HCT116 (cell line): ENCODE measurements at regions of chr2 and their contacts with region 1.

Region 1: GRCh38 chr2:68031542-68032160 is 31.2 kb downstream of the C1D start:
- DNase-seq: peak; percentile 32
- ATAC-seq: peak; percentile 77
- H3K4me3 ChIP-seq: no peak overlapping the region
- H3K27ac ChIP-seq: no peak overlapping the region
- H3K4me1 ChIP-seq: no peaks in the 10 kb centered on the region
- H3K27me3 ChIP-seq: peaks cover 5% of the 10 kb centered on the region; the same call in 1 of the 2 replicates
- CTCF ChIP-seq: peak; percentile 39 to 73 (median 53); a peak in 5 of 6 replicates
- POLR2A ChIP-seq: no peak
- RAD21 ChIP-seq: peak; percentile 84

Region 2: GRCh38 chr2:67322353-67323001 is 709.2 kb before region 1 on chr2:
- CTCF ChIA-PET with region 1: no interaction called
- POLR2A ChIA-PET with region 1: no interaction called
- RAD21 ChIA-PET with region 1: no interaction called
- intact Hi-C with region 1: no loop called
- DNase-seq: peak; percentile 47
- ATAC-seq: peak; percentile 95
- H3K4me3 ChIP-seq: no peak overlapping the region
- H3K27ac ChIP-seq: no peak overlapping the region
- H3K4me1 ChIP-seq: no peaks in the 10 kb centered on the region
- H3K27me3 ChIP-seq: peaks cover 18% of the 10 kb centered on the region; the same call in 1 of the 2 replicates
- CTCF ChIP-seq: peak; percentile 26 to 52 (median 50); a peak in 3 of 6 replicates
- POLR2A ChIP-seq: no peak
- RAD21 ChIP-seq: peak; percentile 70

Region 3: GRCh38 chr2:67733517-67733916 is 298.1 kb before region 1 on chr2:
- CTCF ChIA-PET with region 1: interaction called, 28 read pairs
- POLR2A ChIA-PET with region 1: no interaction called
- RAD21 ChIA-PET with region 1: interaction called, 3 to 4 read pairs
- intact Hi-C with region 1: loop called (anchors 1 kb)
- DNase-seq: peak; percentile 12
- ATAC-seq: peak; percentile 97
- H3K4me3 ChIP-seq: no peak overlapping the region
- H3K27ac ChIP-seq: no peak overlapping the region
- H3K4me1 ChIP-seq: no peaks in the 10 kb centered on the region
- H3K27me3 ChIP-seq: peaks cover 21% of the 10 kb centered on the region
- CTCF ChIP-seq: peak; percentile 20 to 49 (median 36); a peak in 4 of 6 replicates
- POLR2A ChIP-seq: no peak
- RAD21 ChIP-seq: peak; percentile 36

Region 4: GRCh38 chr2:67846370-67847070 is 185.1 kb before region 1 on chr2:
- CTCF ChIA-PET with region 1: interaction called, 10 read pairs
- POLR2A ChIA-PET with region 1: no interaction called
- RAD21 ChIA-PET with region 1: no interaction called
- intact Hi-C with region 1: loop called (anchors 1 kb)
- DNase-seq: peak; percentile 75
- ATAC-seq: peak; percentile 95
- H3K4me3 ChIP-seq: no peak overlapping the region
- H3K27ac ChIP-seq: no peak overlapping the region
- H3K4me1 ChIP-seq: peaks cover 4 to 6% of the 10 kb centered on the region in 2 experiments; a peak in 3 of 4 replicates
- H3K27me3 ChIP-seq: peaks cover 66% of the 10 kb centered on the region
- CTCF ChIP-seq: peak; percentile 36 to 72 (median 71); a peak in 5 of 6 replicates
- POLR2A ChIP-seq: no peak
- RAD21 ChIP-seq: peak; percentile 63

Region 5: GRCh38 chr2:67993329-67993728 is 38.3 kb before region 1 on chr2:
- CTCF ChIA-PET with region 1: no interaction called
- POLR2A ChIA-PET with region 1: no interaction called
- RAD21 ChIA-PET with region 1: no interaction called
- intact Hi-C with region 1: no loop called
- DNase-seq: no peak
- ATAC-seq: no peak
- H3K4me3 ChIP-seq: no peak overlapping the region
- H3K27ac ChIP-seq: no peak overlapping the region
- H3K4me1 ChIP-seq: no peaks in the 10 kb centered on the region
- H3K27me3 ChIP-seq: peaks cover 13% of the 10 kb centered on the region; the same call in 1 of the 2 replicates
- CTCF ChIP-seq: no peak
- POLR2A ChIP-seq: no peak
- RAD21 ChIP-seq: no peak

Region 6: DNA sequence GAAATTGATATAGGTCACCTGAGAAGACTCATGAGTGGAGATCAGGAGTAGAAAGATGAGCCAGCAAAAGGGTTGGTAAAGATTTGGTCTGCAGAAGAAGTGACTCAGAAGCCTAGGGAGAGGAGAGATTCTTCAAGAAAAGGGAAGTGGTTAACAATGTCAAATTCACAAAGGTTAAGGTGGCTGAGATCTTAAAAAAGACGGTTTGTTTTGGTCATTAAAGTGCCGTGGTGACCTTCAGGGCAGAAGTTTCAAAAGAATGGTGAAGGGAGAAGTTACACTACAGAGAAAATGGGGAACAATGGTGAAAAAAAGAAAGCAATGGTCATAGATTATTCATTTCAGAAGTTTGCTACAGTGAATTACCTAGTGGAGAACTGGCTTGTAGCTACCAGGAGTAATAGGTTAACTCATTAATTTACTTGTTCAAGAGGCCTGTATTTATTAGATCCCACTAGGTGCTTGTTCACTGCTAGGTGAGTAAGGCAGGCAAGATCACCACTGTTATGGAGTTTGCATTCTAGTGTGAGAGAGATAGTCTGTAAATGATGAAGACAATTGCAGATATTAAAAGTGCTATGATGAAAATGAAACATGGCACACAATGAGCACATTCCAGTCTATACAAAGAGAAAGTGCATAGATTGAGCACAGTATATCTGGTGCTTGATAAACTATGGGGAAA is 392.5 kb after region 1 on chr2:
- CTCF ChIA-PET with region 1: no interaction called
- POLR2A ChIA-PET with region 1: no interaction called
- RAD21 ChIA-PET with region 1: no interaction called
- intact Hi-C with region 1: no loop called
- DNase-seq: no peak
- ATAC-seq: no peak
- H3K4me3 ChIP-seq: no peak overlapping the region
- H3K27ac ChIP-seq: no peak overlapping the region
- H3K4me1 ChIP-seq: no peaks in the 10 kb centered on the region
- H3K27me3 ChIP-seq: peaks cover 5% of the 10 kb centered on the region; the same call in 1 of the 2 replicates
- CTCF ChIP-seq: no peak
- POLR2A ChIP-seq: no peak
- RAD21 ChIP-seq: no peak